ENCODE measurements at regions of chr14 and their contacts with region 1.

Region 1: GRCh38 chr14:49879683-49880204 is 13.1 kb upstream of the ARF6 start:
- DNase-seq: no peak
- ATAC-seq: peak; percentile 90
- H3K4me3 Mint-ChIP-seq: no peak overlapping the region
- H3K27ac Mint-ChIP-seq: peak overlapping the region; percentile 47
- H3K4me1 Mint-ChIP-seq: peaks cover 14% of the 10 kb centered on the region
- H3K27me3 Mint-ChIP-seq: no peaks in the 10 kb centered on the region
- CTCF ChIP-seq: no peak

Region 2: GRCh38 chr14:49905989-49906388 is 26.2 kb after region 1 on chr14:
- CTCF ChIA-PET with region 1: no interaction called
- POLR2A ChIA-PET with region 1: no interaction called
- intact Hi-C with region 1: no loop called
- DNase-seq: no peak
- ATAC-seq: no peak
- H3K4me3 Mint-ChIP-seq: peak overlapping the region; percentile 53
- H3K27ac Mint-ChIP-seq: peak overlapping the region; percentile 36
- H3K4me1 Mint-ChIP-seq: peaks cover 39% of the 10 kb centered on the region
- H3K27me3 Mint-ChIP-seq: no peaks in the 10 kb centered on the region
- CTCF ChIP-seq: no peak

Region 3: GRCh38 chr14:50045039-50045711 is 165.4 kb after region 1 on chr14:
- CTCF ChIA-PET with region 1: no interaction called
- POLR2A ChIA-PET with region 1: interaction called, 15 read pairs
- intact Hi-C with region 1: no loop called
- DNase-seq: no peak
- ATAC-seq: peak; percentile 70
- H3K4me3 Mint-ChIP-seq: peak overlapping the region; percentile 2
- H3K27ac Mint-ChIP-seq: peak overlapping the region; percentile 92
- H3K4me1 Mint-ChIP-seq: peaks cover 71% of the 10 kb centered on the region
- H3K27me3 Mint-ChIP-seq: no peaks in the 10 kb centered on the region
- CTCF ChIP-seq: no peak

Region 4: DNA sequence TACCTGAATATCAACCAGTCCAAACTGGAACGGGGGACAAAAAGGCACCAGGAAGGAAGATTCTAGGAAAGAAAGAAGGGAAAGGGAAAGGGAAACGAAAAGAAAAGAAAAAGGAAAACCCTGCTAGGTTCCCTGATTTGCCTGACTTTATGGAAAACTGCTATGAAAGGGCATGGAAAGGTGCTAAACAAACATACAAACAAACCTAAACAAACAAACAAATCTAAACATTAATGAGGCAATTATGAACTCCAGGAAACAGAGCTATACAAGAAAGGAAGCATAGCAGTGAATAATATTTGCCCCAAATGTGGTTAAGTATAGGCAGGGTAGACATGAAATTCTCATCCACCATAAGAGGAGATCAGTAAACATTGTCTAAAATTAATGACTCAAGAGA is 248.5 kb after region 1 on chr14:
- CTCF ChIA-PET with region 1: no interaction called
- POLR2A ChIA-PET with region 1: no interaction called
- intact Hi-C with region 1: no loop called
- DNase-seq: no peak
- ATAC-seq: no peak
- H3K4me3 Mint-ChIP-seq: no peak overlapping the region
- H3K27ac Mint-ChIP-seq: no peak overlapping the region
- H3K4me1 Mint-ChIP-seq: peaks cover under 1% of the 10 kb centered on the region
- H3K27me3 Mint-ChIP-seq: no peaks in the 10 kb centered on the region
- CTCF ChIP-seq: no peak